Astrocyte of the cerebellum (primary cell): ENCODE measurements at regions of chr11 and their contacts with region 1.

Region 1: GRCh38 chr11:118021146-118021545 is 35.0 kb downstream of the IL10RA start:
- DNase-seq: no peak
- H3K4me3 ChIP-seq: no peak overlapping the region
- CTCF ChIP-seq: no peak

Region 2: GRCh38 chr11:117970400-117971024 is 50.6 kb before region 1 on chr11:
- in situ Hi-C with region 1: loop called (anchors 5 kb)
- DNase-seq: no peak
- H3K4me3 ChIP-seq: no peak overlapping the region
- CTCF ChIP-seq: no peak